ENCODE measurements at regions of chr2 and their contacts with region 1.

Region 1: GRCh38 chr2:169965495-169965894 is 138.2 kb downstream of the UBR3 start:
- DNase-seq: no peak
- ATAC-seq: no peak
- H3K4me3 ChIP-seq: no peak overlapping the region
- H3K4me3 Mint-ChIP-seq: no peak overlapping the region
- H3K27ac ChIP-seq: no peak overlapping the region
- H3K27ac Mint-ChIP-seq: no peak overlapping the region
- H3K4me1 ChIP-seq: no peaks in the 10 kb centered on the region
- H3K4me1 Mint-ChIP-seq: no peaks in the 10 kb centered on the region
- H3K27me3 ChIP-seq: no peaks in the 10 kb centered on the region
- H3K27me3 Mint-ChIP-seq: no peaks in the 10 kb centered on the region
- CTCF ChIP-seq: no peak

Region 2: DNA sequence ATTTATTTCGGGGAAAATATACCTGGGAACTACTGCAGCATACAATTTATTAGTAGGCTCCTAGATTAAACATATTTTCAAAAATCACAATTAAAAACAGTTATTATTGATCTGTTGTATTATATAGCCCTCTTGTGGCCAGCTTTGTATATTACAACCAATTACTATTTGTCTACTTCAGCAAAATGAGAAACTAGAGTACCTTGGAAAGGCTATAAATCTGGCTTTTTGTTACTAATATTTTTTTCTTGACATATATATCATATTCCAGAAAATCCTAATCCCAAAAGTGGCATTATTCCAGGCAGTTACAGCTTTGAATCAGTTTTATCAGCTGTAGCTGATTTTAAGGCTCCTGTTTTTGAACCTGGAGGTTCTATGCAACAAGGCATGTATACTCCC is 37.0 kb before region 1 on chr2:
- CTCF ChIA-PET with region 1: no interaction called
- POLR2A ChIA-PET with region 1: no interaction called
- intact Hi-C with region 1: no loop called
- DNase-seq: peak in 2 of 9 experiments; percentile 49 to 58
- ATAC-seq: peak; percentile 54
- H3K4me3 ChIP-seq: no peak overlapping the region
- H3K4me3 Mint-ChIP-seq: no peak overlapping the region
- H3K27ac ChIP-seq: no peak overlapping the region
- H3K27ac Mint-ChIP-seq: no peak overlapping the region
- H3K4me1 ChIP-seq: no peaks in the 10 kb centered on the region
- H3K4me1 Mint-ChIP-seq: no peaks in the 10 kb centered on the region
- H3K27me3 ChIP-seq: no peaks in the 10 kb centered on the region
- H3K27me3 Mint-ChIP-seq: no peaks in the 10 kb centered on the region
- CTCF ChIP-seq: peak; percentile 97

Region 3: DNA sequence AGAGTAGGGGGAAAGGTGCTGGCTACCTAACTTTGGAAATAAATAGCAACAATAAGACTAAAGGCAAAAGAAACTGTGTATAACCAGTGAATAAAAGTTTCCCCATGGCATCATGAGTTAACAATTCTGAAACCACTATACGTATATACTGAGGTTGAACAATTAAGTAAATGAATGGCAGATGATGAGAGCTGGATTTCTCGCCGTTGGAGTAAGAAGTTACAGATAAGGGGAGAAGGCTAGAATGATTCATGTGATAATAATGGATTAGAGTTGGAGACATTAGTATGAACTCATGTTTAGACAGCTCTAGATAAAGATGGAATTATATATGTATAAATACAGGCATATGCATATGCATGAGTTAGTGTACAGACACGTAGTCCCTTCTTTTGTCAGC is 14.5 kb after region 1 on chr2:
- CTCF ChIA-PET with region 1: no interaction called
- POLR2A ChIA-PET with region 1: no interaction called
- intact Hi-C with region 1: loop called in 1 of 2 experiments (anchors 1 kb)
- DNase-seq: no peak
- ATAC-seq: no peak
- H3K4me3 ChIP-seq: no peak overlapping the region
- H3K4me3 Mint-ChIP-seq: no peak overlapping the region
- H3K27ac ChIP-seq: no peak overlapping the region
- H3K27ac Mint-ChIP-seq: no peak overlapping the region
- H3K4me1 ChIP-seq: no peaks in the 10 kb centered on the region
- H3K4me1 Mint-ChIP-seq: peaks cover 14% of the 10 kb centered on the region
- H3K27me3 ChIP-seq: no peaks in the 10 kb centered on the region
- H3K27me3 Mint-ChIP-seq: no peaks in the 10 kb centered on the region
- CTCF ChIP-seq: no peak